Activated CD8-positive, alpha-beta T cell treated with anti-CD3 and anti-CD28 coated beads for 36 hours (primary cell): ENCODE measurements at regions of chr15 and their contacts with region 1.

Region 1: DNA sequence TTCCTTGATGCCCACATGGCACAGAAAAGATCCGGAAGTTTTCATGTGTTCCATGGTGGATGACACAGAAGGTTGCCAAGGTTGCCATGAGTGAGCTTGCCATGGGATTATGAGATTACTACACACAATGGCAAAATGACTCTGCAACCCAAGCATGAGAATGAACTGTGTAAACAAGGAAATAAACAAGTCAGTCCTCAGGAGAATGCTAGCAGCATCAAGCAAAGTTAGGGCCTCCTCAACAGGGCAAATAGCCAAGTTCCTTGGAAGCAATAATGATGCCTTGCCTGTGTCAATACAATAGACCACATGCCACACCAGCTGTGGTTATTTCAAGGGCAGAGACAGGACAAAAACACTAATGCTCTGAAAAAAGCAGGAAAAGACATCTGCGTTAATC is 41.8 kb downstream of the AQR start:
- DNase-seq: no peak
- ATAC-seq: no peak
- H3K4me3 Mint-ChIP-seq: no peak overlapping the region
- H3K27ac Mint-ChIP-seq: no peak overlapping the region
- H3K4me1 Mint-ChIP-seq: no peaks in the 10 kb centered on the region
- H3K27me3 Mint-ChIP-seq: no peaks in the 10 kb centered on the region
- CTCF ChIP-seq: no peak

Region 2: GRCh38 chr15:34065941-34066340 is 861.8 kb before region 1 on chr15:
- CTCF ChIA-PET with region 1: no interaction called
- POLR2A ChIA-PET with region 1: no interaction called
- intact Hi-C with region 1: loop called (anchors 10 kb)
- DNase-seq: no peak
- ATAC-seq: no peak
- H3K4me3 Mint-ChIP-seq: no peak overlapping the region
- H3K27ac Mint-ChIP-seq: no peak overlapping the region
- H3K4me1 Mint-ChIP-seq: peaks cover 3% of the 10 kb centered on the region
- H3K27me3 Mint-ChIP-seq: no peaks in the 10 kb centered on the region
- CTCF ChIP-seq: no peak

Region 3: GRCh38 chr15:34621675-34622074 is 306.1 kb before region 1 on chr15:
- CTCF ChIA-PET with region 1: no interaction called
- POLR2A ChIA-PET with region 1: no interaction called
- intact Hi-C with region 1: loop called (anchors 5 kb)
- DNase-seq: no peak
- ATAC-seq: no peak
- H3K4me3 Mint-ChIP-seq: no peak overlapping the region
- H3K27ac Mint-ChIP-seq: no peak overlapping the region
- H3K4me1 Mint-ChIP-seq: no peaks in the 10 kb centered on the region
- H3K27me3 Mint-ChIP-seq: peaks cover 27% of the 10 kb centered on the region
- CTCF ChIP-seq: peak; percentile 16

Region 4: GRCh38 chr15:34942363-34942762 is 14.6 kb after region 1 on chr15:
- CTCF ChIA-PET with region 1: no interaction called
- POLR2A ChIA-PET with region 1: no interaction called
- intact Hi-C with region 1: no loop called
- DNase-seq: no peak
- ATAC-seq: no peak
- H3K4me3 Mint-ChIP-seq: no peak overlapping the region
- H3K27ac Mint-ChIP-seq: no peak overlapping the region
- H3K4me1 Mint-ChIP-seq: no peaks in the 10 kb centered on the region
- H3K27me3 Mint-ChIP-seq: no peaks in the 10 kb centered on the region
- CTCF ChIP-seq: no peak

Region 5: GRCh38 chr15:35028235-35028984 is 100.7 kb after region 1 on chr15:
- CTCF ChIA-PET with region 1: no interaction called
- POLR2A ChIA-PET with region 1: no interaction called
- intact Hi-C with region 1: no loop called
- DNase-seq: no peak
- ATAC-seq: no peak
- H3K4me3 Mint-ChIP-seq: no peak overlapping the region
- H3K27ac Mint-ChIP-seq: no peak overlapping the region
- H3K4me1 Mint-ChIP-seq: no peaks in the 10 kb centered on the region
- H3K27me3 Mint-ChIP-seq: peaks cover 6% of the 10 kb centered on the region
- CTCF ChIP-seq: no peak